AG04450 (cell line): ENCODE measurements at regions of chr2 and their contacts with region 1.

Region 1: DNA sequence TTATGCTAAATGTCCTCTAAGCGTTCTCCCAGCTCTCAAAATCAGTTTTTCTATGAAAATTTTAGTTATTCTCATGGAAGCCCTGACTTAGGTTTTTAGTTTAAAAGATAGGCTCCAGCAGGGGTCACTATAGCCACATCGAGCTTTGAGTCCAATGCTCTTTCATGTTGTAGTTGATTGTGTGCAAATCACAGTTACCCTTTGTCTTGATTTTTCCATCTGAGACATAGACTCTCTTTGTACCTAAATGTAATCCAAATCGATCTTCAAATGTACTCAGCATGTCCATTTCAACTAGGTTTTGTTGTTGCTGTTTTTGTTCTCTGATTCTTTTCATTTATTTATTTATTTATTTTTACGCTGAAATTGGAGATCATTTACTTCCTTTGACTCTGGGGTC is 26.4 kb upstream of the MSTN start:
- DNase-seq: peak; percentile 24
- H3K4me3 ChIP-seq: no peak overlapping the region
- H3K27ac ChIP-seq: no peak overlapping the region
- H3K27me3 ChIP-seq: no peaks in the 10 kb centered on the region
- CTCF ChIP-seq: peak; percentile 80

Region 2: GRCh38 chr2:190121971-190122370 is 33.1 kb after region 1 on chr2:
- CTCF ChIA-PET with region 1: interaction called, 18 read pairs
- POLR2A ChIA-PET with region 1: no interaction called
- DNase-seq: no peak
- H3K4me3 ChIP-seq: no peak overlapping the region
- H3K27ac ChIP-seq: no peak overlapping the region
- H3K27me3 ChIP-seq: no peaks in the 10 kb centered on the region
- CTCF ChIP-seq: peak; percentile 55

Region 3: GRCh38 chr2:190277234-190278112 is 188.6 kb after region 1 on chr2:
- CTCF ChIA-PET with region 1: interaction called, 31 read pairs
- POLR2A ChIA-PET with region 1: interaction called, 3 read pairs
- DNase-seq: no peak
- H3K4me3 ChIP-seq: no peak overlapping the region
- H3K27ac ChIP-seq: no peak overlapping the region
- H3K27me3 ChIP-seq: no peaks in the 10 kb centered on the region
- CTCF ChIP-seq: peak; percentile 63

Region 4: GRCh38 chr2:190355980-190356644 is 267.2 kb after region 1 on chr2:
- CTCF ChIA-PET with region 1: interaction called, 11 read pairs
- POLR2A ChIA-PET with region 1: no interaction called
- DNase-seq: no peak
- H3K4me3 ChIP-seq: no peak overlapping the region
- H3K27ac ChIP-seq: no peak overlapping the region
- H3K27me3 ChIP-seq: no peaks in the 10 kb centered on the region
- CTCF ChIP-seq: no peak